Naive thymus-derived CD4-positive, alpha-beta T cell (primary cell): ENCODE measurements at regions of chr16 and their contacts with region 1.

Region 1: GRCh38 chr16:27203429-27204231 is at the start of gene KDM8:
- DNase-seq: peak; percentile 96 to 100 (median 100)
- ATAC-seq: peak; percentile 88
- H3K4me3 ChIP-seq: peak within 1 kb of the TSS; percentile 97
- H3K4me3 Mint-ChIP-seq: peak within 1 kb of the TSS; percentile 91 to 100 (median 98)
- H3K27ac ChIP-seq: peak within 1 kb of the TSS; percentile 93
- H3K27ac Mint-ChIP-seq: peak within 1 kb of the TSS; percentile 94 to 100 (median 100)
- H3K4me1 ChIP-seq: peaks cover 40 to 50% of the 10 kb centered on the region in 2 donors
- H3K4me1 Mint-ChIP-seq: peaks cover 41 to 70% (median 60%) of the 10 kb centered on the region in 7 donors
- H3K27me3 ChIP-seq: no peaks in the 10 kb centered on the region
- H3K27me3 Mint-ChIP-seq: peaks cover 0 to 3% (median 0%) of the 10 kb centered on the region in 5 donors
- total RNA-seq, gene KDM8: 15.6 to 34.4 (median 19.0) TPM

Region 2: GRCh38 chr16:27052007-27052406 is 151.6 kb before region 1 on chr16:
- CTCF ChIA-PET with region 1: no interaction called
- POLR2A ChIA-PET with region 1: no interaction called
- intact Hi-C with region 1: no loop called
- DNase-seq: no peak
- ATAC-seq: no peak
- H3K4me3 ChIP-seq: no peak overlapping the region
- H3K4me3 Mint-ChIP-seq: no peak overlapping the region
- H3K27ac ChIP-seq: no peak overlapping the region
- H3K27ac Mint-ChIP-seq: no peak overlapping the region
- H3K4me1 ChIP-seq: no peaks in the 10 kb centered on the region
- H3K4me1 Mint-ChIP-seq: no peaks in the 10 kb centered on the region
- H3K27me3 ChIP-seq: no peaks in the 10 kb centered on the region
- H3K27me3 Mint-ChIP-seq: no peaks in the 10 kb centered on the region

Region 3: DNA sequence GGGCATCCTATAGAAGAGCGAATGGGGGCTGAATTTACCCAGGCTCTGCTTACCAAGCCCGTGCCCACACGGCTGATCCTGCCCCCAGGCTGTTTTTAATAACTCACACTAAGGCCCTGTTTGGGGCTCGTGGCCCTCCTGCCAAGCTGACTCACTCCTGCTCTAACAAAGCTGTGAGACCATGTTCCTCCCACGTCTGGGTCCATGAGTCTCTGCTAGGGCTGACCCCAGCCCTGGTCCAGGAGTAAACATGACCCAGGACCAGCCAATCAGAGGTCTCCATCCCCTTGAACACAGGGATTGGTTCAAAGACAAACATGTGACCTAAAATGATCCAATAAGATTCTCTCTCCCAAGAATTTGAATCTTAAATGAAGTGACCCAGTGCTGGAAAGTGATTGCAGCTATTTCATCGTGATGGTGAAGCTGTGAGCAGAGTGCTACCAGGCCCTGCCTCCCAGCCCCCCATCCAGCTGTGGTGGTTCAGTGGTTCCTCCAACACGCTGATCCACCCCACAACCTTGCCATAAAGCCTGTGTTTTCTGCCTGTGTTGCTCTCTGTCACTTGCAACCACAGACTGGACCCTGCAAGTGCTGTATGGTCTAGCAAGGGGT is 79.7 kb before region 1 on chr16:
- CTCF ChIA-PET with region 1: no interaction called
- POLR2A ChIA-PET with region 1: no interaction called
- intact Hi-C with region 1: no loop called
- DNase-seq: no peak
- ATAC-seq: no peak
- H3K4me3 ChIP-seq: no peak overlapping the region
- H3K4me3 Mint-ChIP-seq: no peak overlapping the region
- H3K27ac ChIP-seq: no peak overlapping the region
- H3K27ac Mint-ChIP-seq: no peak overlapping the region
- H3K4me1 ChIP-seq: no peaks in the 10 kb centered on the region
- H3K4me1 Mint-ChIP-seq: no peaks in the 10 kb centered on the region
- H3K27me3 ChIP-seq: peaks cover 0 to 2% of the 10 kb centered on the region in 2 donors
- H3K27me3 Mint-ChIP-seq: peaks cover 0 to 12% (median 0%) of the 10 kb centered on the region in 5 donors

Region 4: GRCh38 chr16:27154705-27155521 is 48.7 kb before region 1 on chr16:
- CTCF ChIA-PET with region 1: interaction called, 3 read pairs
- POLR2A ChIA-PET with region 1: interaction called, 10 read pairs
- intact Hi-C with region 1: no loop called
- DNase-seq: peak; percentile 26 to 74 (median 56)
- ATAC-seq: peak; percentile 90
- H3K4me3 ChIP-seq: no peak overlapping the region
- H3K4me3 Mint-ChIP-seq: peak overlapping the region in 2 of 10 donors; percentile 3 to 16
- H3K27ac ChIP-seq: no peak overlapping the region
- H3K27ac Mint-ChIP-seq: peak overlapping the region in 7 of 9 donors; percentile 18 to 91 (median 61)
- H3K4me1 ChIP-seq: peaks cover 0 to 8% of the 10 kb centered on the region in 2 donors
- H3K4me1 Mint-ChIP-seq: peaks cover 6 to 28% (median 15%) of the 10 kb centered on the region in 7 donors
- H3K27me3 ChIP-seq: no peaks in the 10 kb centered on the region
- H3K27me3 Mint-ChIP-seq: no peaks in the 10 kb centered on the region

Region 5: GRCh38 chr16:27179500-27180072 is 24.0 kb before region 1 on chr16:
- CTCF ChIA-PET with region 1: interaction called, 91 read pairs
- POLR2A ChIA-PET with region 1: interaction called, 59 read pairs
- intact Hi-C with region 1: loop called (anchors 1 kb)
- DNase-seq: peak; percentile 70 to 91 (median 84)
- ATAC-seq: peak; percentile 100
- H3K4me3 ChIP-seq: no peak overlapping the region
- H3K4me3 Mint-ChIP-seq: peak overlapping the region in 9 of 10 donors; percentile 5 to 56 (median 46)
- H3K27ac ChIP-seq: peak overlapping the region; percentile 19
- H3K27ac Mint-ChIP-seq: peak overlapping the region; percentile 51 to 95 (median 86)
- H3K4me1 ChIP-seq: peaks cover 17 to 34% of the 10 kb centered on the region in 2 donors
- H3K4me1 Mint-ChIP-seq: peaks cover 20 to 62% (median 48%) of the 10 kb centered on the region in 7 donors
- H3K27me3 ChIP-seq: no peaks in the 10 kb centered on the region
- H3K27me3 Mint-ChIP-seq: peaks cover 0 to 13% (median 0%) of the 10 kb centered on the region in 5 donors

Region 6: DNA sequence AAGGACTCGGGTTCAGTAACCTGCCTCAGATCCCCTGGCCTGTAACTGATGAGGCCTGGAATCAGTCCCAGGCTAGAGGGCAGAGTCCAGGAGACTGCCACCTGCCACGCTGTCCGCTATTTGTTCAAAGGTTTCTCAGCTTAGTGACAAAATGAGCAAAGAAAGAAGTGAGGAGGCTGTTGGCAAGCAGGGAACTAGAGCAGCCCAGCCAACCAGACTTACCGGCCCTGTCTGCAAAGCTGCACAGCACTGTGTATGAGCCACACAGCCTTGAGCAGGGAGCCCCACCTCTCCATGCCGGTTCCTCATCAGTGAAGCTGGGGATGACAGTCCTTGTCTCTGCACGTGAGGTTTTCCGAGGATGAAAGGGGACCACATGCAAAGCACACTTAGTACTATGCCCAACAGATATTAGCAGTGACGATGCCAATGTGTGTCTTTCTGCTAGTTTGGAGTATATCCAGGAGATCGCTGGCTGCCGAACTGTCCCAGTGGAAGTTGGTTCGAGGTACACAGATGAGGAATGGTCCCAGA is 10.9 kb after region 1 on chr16:
- CTCF ChIA-PET with region 1: no interaction called
- POLR2A ChIA-PET with region 1: interaction called, 17 read pairs
- intact Hi-C with region 1: no loop called
- DNase-seq: no peak
- ATAC-seq: no peak
- H3K4me3 ChIP-seq: no peak overlapping the region
- H3K4me3 Mint-ChIP-seq: no peak overlapping the region
- H3K27ac ChIP-seq: no peak overlapping the region
- H3K27ac Mint-ChIP-seq: peak overlapping the region in 4 of 9 donors; percentile 46 to 83 (median 69)
- H3K4me1 ChIP-seq: peaks cover 0 to 6% of the 10 kb centered on the region in 2 donors
- H3K4me1 Mint-ChIP-seq: peaks cover 0 to 27% (median 18%) of the 10 kb centered on the region in 7 donors
- H3K27me3 ChIP-seq: no peaks in the 10 kb centered on the region
- H3K27me3 Mint-ChIP-seq: no peaks in the 10 kb centered on the region

Region 7: DNA sequence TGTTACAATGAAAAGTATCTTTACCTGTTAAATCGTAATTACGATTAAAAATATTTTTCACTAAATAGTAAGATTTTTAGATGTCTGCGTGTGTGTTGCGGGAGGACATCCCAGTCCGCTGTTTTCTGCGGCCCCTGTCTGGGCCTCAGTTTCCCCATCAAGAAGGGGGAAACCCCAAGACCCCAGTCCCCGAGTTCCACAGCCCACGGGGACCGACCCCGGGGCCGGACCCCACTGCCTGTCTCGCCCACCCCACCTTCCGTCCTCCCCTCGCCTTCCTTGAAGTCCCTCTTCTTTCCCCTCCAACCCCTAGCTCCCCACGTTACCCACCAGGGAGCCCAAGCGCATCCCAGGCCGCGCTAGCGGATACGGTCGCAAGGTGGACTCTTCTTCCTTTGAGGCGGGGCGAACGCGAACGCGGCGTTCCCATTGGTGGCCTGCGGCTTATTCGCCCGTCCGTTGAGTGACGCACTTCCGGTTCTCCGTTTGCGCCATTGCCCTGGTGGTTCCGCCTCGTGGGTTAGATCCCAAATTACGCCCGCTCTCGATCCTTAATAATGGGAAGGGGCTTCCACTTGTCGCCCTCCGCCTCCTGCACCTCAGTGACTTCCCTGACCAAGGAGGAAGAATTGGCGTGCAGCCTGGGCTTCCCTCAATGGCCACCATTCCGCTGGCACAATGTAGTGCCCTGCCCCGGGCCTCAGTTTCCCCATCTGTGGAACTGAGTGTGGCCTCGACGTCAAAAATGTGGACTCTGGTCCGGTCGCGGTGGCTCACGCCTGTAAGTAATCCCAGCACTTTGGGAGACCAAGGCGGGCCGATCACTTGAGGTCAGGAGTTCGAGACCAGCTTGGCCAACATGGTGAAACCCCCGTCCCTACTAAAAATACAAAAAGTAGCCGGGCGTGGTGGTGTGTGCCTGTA is 65.0 kb after region 1 on chr16 and contains the start of gene NSMCE1:
- CTCF ChIA-PET with region 1: no interaction called
- POLR2A ChIA-PET with region 1: interaction called, 3 read pairs
- intact Hi-C with region 1: loop called (anchors 1 to 2 kb)
- DNase-seq: peak; percentile 83 to 93 (median 92)
- ATAC-seq: peak; percentile 99
- H3K4me3 ChIP-seq: peak within 1 kb of the TSS; percentile 92
- H3K4me3 Mint-ChIP-seq: peak within 1 kb of the TSS; percentile 92 to 99 (median 96)
- H3K27ac ChIP-seq: peak within 1 kb of the TSS; percentile 87
- H3K27ac Mint-ChIP-seq: peak within 1 kb of the TSS; percentile 94 to 99 (median 99)
- H3K4me1 ChIP-seq: peaks cover 15 to 36% of the 10 kb centered on the region in 2 donors
- H3K4me1 Mint-ChIP-seq: peaks cover 41 to 95% (median 74%) of the 10 kb centered on the region in 7 donors
- H3K27me3 ChIP-seq: no peaks in the 10 kb centered on the region
- H3K27me3 Mint-ChIP-seq: no peaks in the 10 kb centered on the region
- total RNA-seq, gene NSMCE1: 45.5 to 106 (median 70.2) TPM

Region 8: GRCh38 chr16:27401768-27402568 is 198.3 kb after region 1 on chr16 and contains the start of gene IL21R:
- CTCF ChIA-PET with region 1: no interaction called
- POLR2A ChIA-PET with region 1: interaction called, 3 read pairs
- intact Hi-C with region 1: loop called in 1 of 2 experiments (anchors 1 kb)
- DNase-seq: peak; percentile 72 to 91 (median 87)
- ATAC-seq: peak; percentile 91
- H3K4me3 ChIP-seq: peak within 1 kb of the TSS; percentile 88
- H3K4me3 Mint-ChIP-seq: peak within 1 kb of the TSS; percentile 76 to 99 (median 98)
- H3K27ac ChIP-seq: peak within 1 kb of the TSS; percentile 91
- H3K27ac Mint-ChIP-seq: peak within 1 kb of the TSS; percentile 89 to 99 (median 98)
- H3K4me1 ChIP-seq: peaks cover 38 to 44% of the 10 kb centered on the region in 2 donors
- H3K4me1 Mint-ChIP-seq: peaks cover 23 to 75% (median 70%) of the 10 kb centered on the region in 7 donors
- H3K27me3 ChIP-seq: no peaks in the 10 kb centered on the region
- H3K27me3 Mint-ChIP-seq: no peaks in the 10 kb centered on the region
- total RNA-seq, gene IL21R: 24.6 to 40.9 (median 31.4) TPM

Region 9: DNA sequence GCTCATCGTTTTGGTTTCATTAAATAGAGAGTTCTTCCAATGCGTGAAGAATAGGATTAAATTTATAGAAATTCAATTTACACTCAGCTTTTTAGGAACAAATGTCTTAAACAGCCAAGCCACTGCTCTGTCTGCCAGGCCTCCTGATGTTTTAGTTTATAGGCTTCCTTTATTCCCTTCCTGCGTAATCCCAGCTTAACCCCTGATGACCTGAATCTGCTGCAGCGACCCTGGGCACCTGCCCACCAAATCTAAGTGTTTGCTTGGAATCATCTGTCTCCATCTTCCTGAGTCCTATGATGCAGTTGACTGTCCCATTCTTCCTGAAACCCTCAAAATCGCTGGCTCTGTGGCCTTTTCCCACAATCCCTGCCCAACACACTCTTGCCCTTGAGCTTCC is 679.9 kb after region 1 on chr16:
- CTCF ChIA-PET with region 1: no interaction called
- POLR2A ChIA-PET with region 1: no interaction called
- intact Hi-C with region 1: no loop called
- DNase-seq: no peak
- ATAC-seq: no peak
- H3K4me3 ChIP-seq: no peak overlapping the region
- H3K4me3 Mint-ChIP-seq: no peak overlapping the region
- H3K27ac ChIP-seq: no peak overlapping the region
- H3K27ac Mint-ChIP-seq: no peak overlapping the region
- H3K4me1 ChIP-seq: no peaks in the 10 kb centered on the region
- H3K4me1 Mint-ChIP-seq: peaks cover 0 to 5% (median 0%) of the 10 kb centered on the region in 7 donors
- H3K27me3 ChIP-seq: no peaks in the 10 kb centered on the region
- H3K27me3 Mint-ChIP-seq: peaks cover 0 to 76% (median 52%) of the 10 kb centered on the region in 5 donors